Activated naive CD4-positive, alpha-beta T cell treated with anti-CD3 and anti-CD28 coated beads for 36 hours (primary cell): ENCODE measurements at regions of chr10 and their contacts with region 1.

Region 1: DNA sequence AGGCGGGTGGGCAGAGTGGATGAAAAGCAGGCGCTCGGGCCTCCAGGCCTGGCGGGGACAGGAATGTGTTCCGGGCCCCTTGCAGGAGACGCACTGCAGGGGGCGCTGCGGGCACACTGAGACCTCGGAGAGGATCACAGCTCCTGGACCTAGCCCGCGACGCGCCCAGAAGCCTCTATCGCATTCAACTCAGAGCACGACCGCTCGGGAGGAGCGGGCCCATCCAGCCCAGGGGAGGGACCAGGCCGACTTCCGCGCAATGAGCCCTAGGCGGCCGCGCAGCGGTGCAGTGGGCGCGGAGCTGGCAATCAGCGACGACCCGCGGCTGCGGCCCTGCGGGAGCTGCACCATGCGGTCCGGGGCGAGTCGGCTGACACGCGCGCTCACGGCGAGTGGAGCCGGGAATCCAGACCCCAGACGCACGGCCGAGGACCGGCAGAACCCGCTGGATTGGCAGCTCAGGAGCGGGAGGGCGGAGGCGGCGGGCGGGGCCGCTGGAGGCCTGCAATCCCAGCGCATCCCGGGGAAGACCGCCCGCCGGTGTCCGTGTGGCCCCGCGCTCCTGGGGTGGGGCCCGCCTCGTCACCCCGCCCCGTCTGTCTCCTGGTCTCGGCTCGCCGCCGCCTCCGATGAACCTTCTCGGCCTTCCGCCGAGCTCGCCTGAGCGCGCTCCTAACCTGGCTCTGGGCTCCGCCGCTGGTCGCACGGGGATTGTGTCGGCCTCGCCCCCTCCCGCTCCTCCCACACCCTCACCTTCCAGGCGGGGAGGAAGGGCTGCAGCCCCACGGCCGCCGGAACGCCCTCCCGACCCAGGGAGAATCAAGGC is 33.5 kb upstream of the GRID1 start:
- DNase-seq: peak; percentile 98
- H3K4me3 Mint-ChIP-seq: peak overlapping the region; percentile 87
- H3K27ac Mint-ChIP-seq: peak overlapping the region; percentile 87
- H3K4me1 Mint-ChIP-seq: peaks cover 15% of the 10 kb centered on the region
- H3K27me3 Mint-ChIP-seq: no peaks in the 10 kb centered on the region

Region 2: GRCh38 chr10:86389441-86390193 is 10.5 kb before region 1 on chr10:
- CTCF ChIA-PET with region 1: interaction called, 5 read pairs
- intact Hi-C with region 1: loop called (anchors 1 kb)
- DNase-seq: no peak
- H3K4me3 Mint-ChIP-seq: peak overlapping the region; percentile 72
- H3K27ac Mint-ChIP-seq: no peak overlapping the region
- H3K4me1 Mint-ChIP-seq: peaks cover 7% of the 10 kb centered on the region
- H3K27me3 Mint-ChIP-seq: peaks cover 25% of the 10 kb centered on the region

Region 3: DNA sequence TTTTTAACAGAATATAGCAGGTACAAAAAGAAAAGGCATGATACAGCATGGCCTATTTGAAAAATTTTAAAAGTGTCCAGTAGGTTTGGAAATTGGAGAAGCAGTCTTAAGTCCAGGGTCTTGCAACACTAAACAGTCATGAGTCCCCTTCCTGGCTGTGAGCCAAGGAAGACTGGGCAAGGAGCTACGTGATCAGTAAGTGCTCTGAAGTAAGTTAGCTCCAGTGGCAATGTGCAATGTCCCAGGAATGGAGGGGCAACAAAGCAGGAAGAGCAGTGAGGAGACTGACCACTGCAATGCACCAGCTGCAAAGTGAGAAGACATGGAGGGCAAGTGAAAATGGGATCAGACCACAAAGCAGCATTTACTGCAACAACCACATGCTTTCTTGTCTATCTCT is 39.5 kb after region 1 on chr10:
- CTCF ChIA-PET with region 1: interaction called, 10 read pairs
- intact Hi-C with region 1: loop called (anchors 1 kb)
- DNase-seq: no peak
- H3K4me3 Mint-ChIP-seq: no peak overlapping the region
- H3K27ac Mint-ChIP-seq: peak overlapping the region; percentile 38
- H3K4me1 Mint-ChIP-seq: peaks cover 21% of the 10 kb centered on the region
- H3K27me3 Mint-ChIP-seq: no peaks in the 10 kb centered on the region

Region 4: DNA sequence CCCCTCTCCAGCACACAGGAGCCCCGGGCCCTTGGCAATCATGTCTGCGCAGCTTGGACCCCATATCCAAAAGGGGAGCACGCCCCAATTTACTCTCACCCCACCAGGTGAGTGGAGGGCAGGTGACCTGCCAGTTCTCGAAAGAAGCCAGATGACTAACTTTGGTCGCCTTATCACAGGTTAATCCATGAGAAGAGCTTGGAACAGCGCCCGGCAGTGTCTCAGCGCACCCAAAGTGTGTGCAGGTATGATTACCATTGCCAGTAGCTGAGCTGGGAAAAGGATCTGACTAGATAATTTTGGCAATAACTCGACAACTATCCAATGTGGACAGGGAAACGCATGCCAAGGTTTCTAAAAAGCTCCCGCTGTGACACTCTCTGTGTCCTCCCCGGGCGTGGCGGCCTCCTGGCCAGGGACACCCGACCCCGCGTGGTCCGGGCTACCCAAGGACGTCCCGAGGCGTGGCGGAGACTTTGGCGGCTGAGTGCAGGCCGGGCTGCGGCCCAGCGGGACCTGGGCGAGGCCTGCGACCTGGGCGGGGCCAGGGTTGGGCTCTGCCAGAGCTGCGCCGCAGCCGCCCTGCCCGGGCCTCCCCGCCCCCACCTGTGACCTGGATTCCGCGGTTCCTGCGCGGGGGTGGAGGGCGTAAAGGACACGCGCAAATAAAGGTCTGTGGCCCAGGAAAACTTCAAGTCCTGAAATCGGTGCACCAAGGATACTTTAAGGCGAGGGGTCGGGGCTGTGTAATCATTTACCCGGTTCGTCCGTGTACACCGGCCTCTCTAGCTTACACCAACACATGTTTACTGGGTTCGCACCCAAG is 135.2 kb after region 1 on chr10:
- CTCF ChIA-PET with region 1: interaction called, 12 read pairs
- intact Hi-C with region 1: loop called (anchors 1 kb)
- DNase-seq: peak; percentile 34
- H3K4me3 Mint-ChIP-seq: peak overlapping the region; percentile 70
- H3K27ac Mint-ChIP-seq: peak overlapping the region; percentile 66
- H3K4me1 Mint-ChIP-seq: peaks cover 26% of the 10 kb centered on the region
- H3K27me3 Mint-ChIP-seq: no peaks in the 10 kb centered on the region

Region 5: DNA sequence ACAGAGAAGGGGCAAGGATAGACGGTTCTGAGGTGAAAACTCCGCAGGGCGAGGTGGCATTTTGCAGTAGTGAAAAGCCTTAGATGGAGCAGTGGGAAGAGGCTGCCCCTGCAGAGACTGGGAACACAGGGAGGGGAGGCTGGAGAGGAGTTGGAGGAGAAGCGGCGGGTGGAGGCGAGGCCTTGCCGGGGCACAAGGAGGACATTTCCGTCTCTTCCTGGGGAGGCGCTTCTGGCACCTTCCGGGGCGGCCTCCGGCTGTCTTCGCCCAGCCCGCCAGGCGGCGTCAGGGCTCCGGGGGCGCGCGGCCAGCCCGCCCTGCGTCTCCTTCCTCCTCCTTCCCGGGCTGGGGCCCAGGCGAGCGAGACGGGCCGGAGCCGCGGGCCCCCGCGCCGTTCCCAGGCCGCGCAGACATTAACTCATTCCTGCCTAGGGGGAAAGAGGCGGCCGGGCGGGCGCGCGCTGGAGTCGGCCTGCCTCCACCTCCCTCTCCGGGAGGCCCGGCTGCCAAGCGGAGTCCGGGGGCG is 311.0 kb after region 1 on chr10:
- CTCF ChIA-PET with region 1: interaction called, 7 read pairs
- intact Hi-C with region 1: loop called (anchors 1 kb)
- DNase-seq: peak; percentile 86
- H3K4me3 Mint-ChIP-seq: peak overlapping the region; percentile 87
- H3K27ac Mint-ChIP-seq: peak overlapping the region; percentile 93
- H3K4me1 Mint-ChIP-seq: peaks cover 14% of the 10 kb centered on the region
- H3K27me3 Mint-ChIP-seq: no peaks in the 10 kb centered on the region

Region 6: DNA sequence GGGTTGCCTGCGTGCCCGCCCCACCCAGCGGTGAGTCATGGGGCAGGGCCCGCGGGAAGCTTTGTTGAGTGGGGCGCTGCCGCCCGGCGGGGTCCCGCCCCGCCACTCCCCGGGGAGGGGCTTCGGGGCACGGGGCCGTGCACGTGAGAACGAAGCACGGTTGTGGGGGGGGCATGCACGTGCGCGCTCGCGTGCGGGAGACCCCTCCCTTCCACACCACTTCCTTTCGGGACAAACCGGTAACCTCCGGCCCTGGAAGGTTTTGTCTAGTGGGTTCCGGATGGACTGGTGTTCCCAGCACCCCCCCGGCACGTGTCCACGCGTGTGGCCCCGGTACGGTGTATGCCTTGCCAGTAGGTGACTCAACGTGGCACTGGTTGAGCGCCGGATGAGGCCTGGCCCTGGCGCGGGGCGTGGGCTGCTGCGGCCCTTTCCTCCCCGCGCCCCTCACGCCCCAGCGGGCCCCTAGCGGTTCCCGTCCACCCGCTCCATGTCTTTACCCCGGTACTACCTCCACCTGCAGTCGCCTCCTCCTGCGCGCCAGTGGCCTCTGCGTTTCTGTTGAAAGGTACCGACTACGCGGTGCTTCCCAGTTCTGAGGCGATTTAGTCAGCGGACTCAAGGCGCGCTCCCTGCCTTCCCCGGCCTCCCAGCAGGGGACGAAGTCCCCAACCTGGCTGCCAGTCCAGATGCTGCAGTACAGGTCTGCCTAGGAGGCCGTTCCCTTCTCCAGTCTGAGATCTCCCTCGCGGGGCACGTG is 571.3 kb after region 1 on chr10:
- CTCF ChIA-PET with region 1: no interaction called
- intact Hi-C with region 1: loop called (anchors 5 kb)
- DNase-seq: peak; percentile 83
- H3K4me3 Mint-ChIP-seq: peak overlapping the region; percentile 72
- H3K27ac Mint-ChIP-seq: peak overlapping the region; percentile 56
- H3K4me1 Mint-ChIP-seq: peaks cover 35% of the 10 kb centered on the region
- H3K27me3 Mint-ChIP-seq: no peaks in the 10 kb centered on the region